ENCODE measurements at regions of chr3 and their contacts with region 1.

Region 1: DNA sequence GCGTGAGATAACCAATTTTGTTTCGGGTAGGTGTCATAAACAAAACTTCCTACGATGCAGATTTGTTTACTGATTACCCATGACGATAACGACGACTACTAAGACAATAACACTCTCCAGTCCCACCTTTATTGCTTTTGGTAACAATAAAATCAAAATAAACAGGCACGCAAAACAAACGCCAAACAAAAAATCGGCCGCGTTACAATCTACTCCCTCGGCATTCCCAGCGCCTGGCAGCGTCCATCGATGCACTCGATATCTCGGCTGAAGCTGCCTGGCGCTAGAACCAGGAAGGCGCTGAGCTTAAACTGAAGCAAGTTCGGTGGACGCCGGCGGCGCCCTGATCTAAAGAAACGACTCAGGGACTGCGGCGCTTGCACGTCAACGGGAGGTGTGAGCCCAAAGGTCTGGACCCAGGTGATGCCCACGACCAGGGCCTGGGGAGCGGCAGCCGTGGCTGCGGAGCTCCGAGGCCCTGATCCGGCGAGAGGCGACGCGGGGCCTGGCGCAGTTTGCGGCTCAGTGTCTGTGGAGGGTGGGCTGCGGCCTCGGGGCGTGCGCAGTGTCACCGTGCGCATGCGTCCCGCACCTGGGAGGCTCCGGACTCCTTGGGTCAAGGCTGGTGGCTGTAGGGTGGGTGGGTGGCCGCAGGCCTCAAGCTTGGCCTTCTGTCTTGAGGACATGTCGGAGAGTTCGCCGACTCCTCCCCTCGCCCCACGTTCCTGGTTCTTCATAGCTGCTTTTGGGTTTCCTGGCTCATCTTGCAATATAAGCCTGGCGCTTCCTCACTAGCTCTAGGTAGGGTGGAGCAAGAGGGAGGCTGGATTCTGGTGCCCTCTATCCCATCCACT is at the start of gene RSRC1:
- DNase-seq: peak; percentile 48 to 89 (median 78)
- ATAC-seq: peak; percentile 89
- H3K4me3 ChIP-seq: peak within 1 kb of the TSS; percentile 76 to 82
- H3K4me3 Mint-ChIP-seq: peak within 1 kb of the TSS; percentile 93
- H3K27ac ChIP-seq: peak within 1 kb of the TSS; percentile 61 to 69
- H3K27ac Mint-ChIP-seq: peak within 1 kb of the TSS; percentile 85
- H3K4me1 ChIP-seq: peaks cover 44% of the 10 kb centered on the region
- H3K4me1 Mint-ChIP-seq: peaks cover 65% of the 10 kb centered on the region
- H3K27me3 ChIP-seq: peaks cover 35 to 41% of the 10 kb centered on the region in 2 experiments
- H3K27me3 Mint-ChIP-seq: peaks cover 36% of the 10 kb centered on the region
- CTCF ChIP-seq: no peak
- total RNA-seq, gene RSRC1: 21.8 to 25.0 TPM

Region 2: GRCh38 chr3:157174649-157175498 is 935.2 kb before region 1 on chr3:
- CTCF ChIA-PET with region 1: no interaction called
- POLR2A ChIA-PET with region 1: no interaction called
- intact Hi-C with region 1: no loop called
- DNase-seq: peak; percentile 94 to 100 (median 98)
- ATAC-seq: peak; percentile 91
- H3K4me3 ChIP-seq: peak overlapping the region; percentile 73 to 89
- H3K4me3 Mint-ChIP-seq: peak overlapping the region; percentile 92
- H3K27ac ChIP-seq: peak overlapping the region; percentile 96 to 98
- H3K27ac Mint-ChIP-seq: peak overlapping the region; percentile 99
- H3K4me1 ChIP-seq: peaks cover 25% of the 10 kb centered on the region
- H3K4me1 Mint-ChIP-seq: peaks cover 30% of the 10 kb centered on the region
- H3K27me3 ChIP-seq: no peaks in the 10 kb centered on the region
- H3K27me3 Mint-ChIP-seq: no peaks in the 10 kb centered on the region
- CTCF ChIP-seq: no peak

Region 3: GRCh38 chr3:157201648-157202278 is 908.3 kb before region 1 on chr3:
- CTCF ChIA-PET with region 1: no interaction called
- POLR2A ChIA-PET with region 1: no interaction called
- intact Hi-C with region 1: no loop called
- DNase-seq: peak in 2 of 9 experiments; percentile 44 to 59
- ATAC-seq: no peak
- H3K4me3 ChIP-seq: no peak overlapping the region
- H3K4me3 Mint-ChIP-seq: no peak overlapping the region
- H3K27ac ChIP-seq: no peak overlapping the region
- H3K27ac Mint-ChIP-seq: no peak overlapping the region
- H3K4me1 ChIP-seq: no peaks in the 10 kb centered on the region
- H3K4me1 Mint-ChIP-seq: no peaks in the 10 kb centered on the region
- H3K27me3 ChIP-seq: no peaks in the 10 kb centered on the region
- H3K27me3 Mint-ChIP-seq: no peaks in the 10 kb centered on the region
- CTCF ChIP-seq: no peak

Region 4: GRCh38 chr3:158097593-158098308 is 12.3 kb before region 1 on chr3:
- CTCF ChIA-PET with region 1: no interaction called
- POLR2A ChIA-PET with region 1: interaction called, 4 read pairs
- intact Hi-C with region 1: loop called in 1 of 2 experiments (anchors 1 kb)
- DNase-seq: peak; percentile 39 to 86 (median 68)
- ATAC-seq: peak; percentile 92
- H3K4me3 ChIP-seq: peak overlapping the region; percentile 54 to 75
- H3K4me3 Mint-ChIP-seq: peak overlapping the region; percentile 88
- H3K27ac ChIP-seq: no peak overlapping the region
- H3K27ac Mint-ChIP-seq: peak overlapping the region; percentile 2
- H3K4me1 ChIP-seq: peaks cover 13% of the 10 kb centered on the region
- H3K4me1 Mint-ChIP-seq: peaks cover 11% of the 10 kb centered on the region
- H3K27me3 ChIP-seq: peaks cover 62 to 83% of the 10 kb centered on the region in 2 experiments
- H3K27me3 Mint-ChIP-seq: peaks cover 92% of the 10 kb centered on the region
- CTCF ChIP-seq: no peak

Region 5: GRCh38 chr3:158649791-158650190 is 539.8 kb after region 1 on chr3:
- CTCF ChIA-PET with region 1: no interaction called
- POLR2A ChIA-PET with region 1: no interaction called
- intact Hi-C with region 1: loop called in 1 of 2 experiments (anchors 5 kb)
- DNase-seq: no peak
- ATAC-seq: no peak
- H3K4me3 ChIP-seq: no peak overlapping the region
- H3K4me3 Mint-ChIP-seq: no peak overlapping the region
- H3K27ac ChIP-seq: no peak overlapping the region
- H3K27ac Mint-ChIP-seq: no peak overlapping the region
- H3K4me1 ChIP-seq: peaks cover 8% of the 10 kb centered on the region
- H3K4me1 Mint-ChIP-seq: peaks cover 30% of the 10 kb centered on the region
- H3K27me3 ChIP-seq: no peaks in the 10 kb centered on the region
- H3K27me3 Mint-ChIP-seq: no peaks in the 10 kb centered on the region
- CTCF ChIP-seq: no peak

Region 6: GRCh38 chr3:158659454-158660237 is 549.6 kb after region 1 on chr3:
- CTCF ChIA-PET with region 1: no interaction called
- POLR2A ChIA-PET with region 1: no interaction called
- intact Hi-C with region 1: loop called in 1 of 2 experiments (anchors 10 kb)
- DNase-seq: peak in 6 of 9 experiments; percentile 16 to 60 (median 50)
- ATAC-seq: peak; percentile 83
- H3K4me3 ChIP-seq: no peak overlapping the region
- H3K4me3 Mint-ChIP-seq: no peak overlapping the region
- H3K27ac ChIP-seq: no peak overlapping the region
- H3K27ac Mint-ChIP-seq: no peak overlapping the region
- H3K4me1 ChIP-seq: no peaks in the 10 kb centered on the region
- H3K4me1 Mint-ChIP-seq: peaks cover 5% of the 10 kb centered on the region
- H3K27me3 ChIP-seq: no peaks in the 10 kb centered on the region
- H3K27me3 Mint-ChIP-seq: no peaks in the 10 kb centered on the region
- CTCF ChIP-seq: peak; percentile 52

Measured in CD8-positive, alpha-beta T cell (primary cell).